Spleen (tissue), 13 donors: ENCODE measurements at regions of chr7 and their contacts with region 1.

Region 1: GRCh38 chr7:90424720-90425119 is 21.5 kb downstream of the CLDN12 start:
- DNase-seq: no peak
- H3K4me3 ChIP-seq: no peak overlapping the region
- H3K27ac ChIP-seq: no peak overlapping the region
- H3K4me1 ChIP-seq: no peaks in the 10 kb centered on the region
- H3K27me3 ChIP-seq: peaks cover 0 to 5% (median 0%) of the 10 kb centered on the region in 7 donors
- CTCF ChIP-seq: no peak
- POLR2A ChIP-seq: no peak

Region 2: GRCh38 chr7:88789480-88790064 is 1635.1 kb before region 1 on chr7:
- intact Hi-C with region 1: loop called (anchors 5 kb)
- DNase-seq: no peak
- H3K4me3 ChIP-seq: no peak overlapping the region
- H3K27ac ChIP-seq: no peak overlapping the region
- H3K4me1 ChIP-seq: no peaks in the 10 kb centered on the region
- H3K27me3 ChIP-seq: no peaks in the 10 kb centered on the region
- CTCF ChIP-seq: peak in 7 of 11 experiments; percentile 12 to 53 (median 35)
- POLR2A ChIP-seq: no peak

Region 3: DNA sequence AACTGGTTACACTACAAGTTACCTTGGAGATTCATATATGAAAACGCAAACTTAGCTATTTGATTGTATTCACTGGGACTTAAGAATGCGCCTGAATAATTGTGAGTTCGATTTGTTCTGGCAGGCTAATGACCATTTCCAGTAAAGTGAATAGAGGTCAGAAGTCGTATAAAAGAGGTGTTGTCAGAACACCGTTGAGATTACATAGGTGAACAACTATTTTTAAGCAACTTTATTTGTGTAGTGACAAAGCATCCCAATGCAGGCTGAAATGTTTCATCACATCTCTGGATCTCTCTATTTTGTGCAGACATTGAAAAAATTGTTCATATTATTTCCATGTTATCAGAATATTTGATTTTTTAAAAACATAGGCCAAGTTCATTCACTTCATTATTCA is 261.2 kb before region 1 on chr7:
- intact Hi-C with region 1: loop called (anchors 5 kb)
- DNase-seq: no peak
- H3K4me3 ChIP-seq: no peak overlapping the region
- H3K27ac ChIP-seq: no peak overlapping the region
- H3K4me1 ChIP-seq: no peaks in the 10 kb centered on the region
- H3K27me3 ChIP-seq: no peaks in the 10 kb centered on the region
- CTCF ChIP-seq: no peak
- POLR2A ChIP-seq: no peak

Region 4: DNA sequence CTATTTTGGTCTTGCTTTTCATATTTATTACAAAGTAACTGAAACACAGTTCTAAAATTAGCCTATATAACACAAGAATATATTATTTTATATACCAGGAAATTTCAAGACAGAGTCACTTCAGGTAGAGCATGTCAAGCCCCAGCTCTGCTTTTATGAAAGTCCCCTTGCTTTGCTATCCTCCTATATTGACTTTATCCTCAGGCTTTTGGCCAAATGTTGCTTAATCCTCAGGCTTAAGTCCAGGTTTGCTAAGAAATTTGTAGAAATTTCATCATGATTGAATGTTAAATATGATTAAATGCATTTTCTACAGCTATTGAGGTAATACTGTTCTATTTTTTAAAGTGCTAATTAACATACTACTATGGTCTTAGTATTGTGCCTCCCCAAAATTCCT is 1067.1 kb after region 1 on chr7:
- intact Hi-C with region 1: no loop called
- DNase-seq: no peak
- H3K4me3 ChIP-seq: no peak overlapping the region
- H3K27ac ChIP-seq: no peak overlapping the region
- H3K4me1 ChIP-seq: no peaks in the 10 kb centered on the region
- H3K27me3 ChIP-seq: no peaks in the 10 kb centered on the region
- CTCF ChIP-seq: no peak
- POLR2A ChIP-seq: no peak